KBM-7 (cell line): ENCODE measurements at regions of chr13 and their contacts with region 1.

Region 1: GRCh38 chr13:95387733-95388207 is 86.5 kb upstream of the ABCC4 start:
- DNase-seq: no peak

Region 2: DNA sequence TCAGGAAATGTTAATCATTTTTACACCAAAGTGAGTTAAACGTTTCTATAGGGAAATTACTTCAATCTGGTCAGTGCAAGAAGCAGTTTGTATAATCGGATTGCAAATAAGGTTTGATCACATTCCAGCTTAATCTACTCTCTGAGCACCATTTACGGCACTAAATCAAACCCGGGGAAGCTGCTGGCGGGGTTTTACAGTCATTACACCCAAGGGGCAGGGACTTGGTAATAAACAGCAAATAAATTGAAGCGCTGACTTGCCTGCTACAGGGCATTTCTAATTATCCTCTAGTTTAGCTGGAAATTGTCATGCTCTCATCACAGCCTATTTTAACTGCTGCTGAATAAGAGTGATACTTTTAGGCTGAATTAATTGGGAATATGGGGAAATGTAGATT is 523.3 kb before region 1 on chr13:
- in situ Hi-C with region 1: no loop called
- DNase-seq: no peak

Region 3: GRCh38 chr13:95191821-95192563 is 195.8 kb before region 1 on chr13:
- in situ Hi-C with region 1: loop called (anchors 25 kb)
- DNase-seq: peak; percentile 88